Activated CD4-positive, alpha-beta T cell treated with anti-CD3 and anti-CD28 coated beads, Interleukin-2, amount 10 ng/mL, durations not matched to agents 24 days and 14 days (primary cell): ENCODE measurements at regions of chr4 and their contacts with region 1.

Region 1: GRCh38 chr4:30903502-30904217 is 183.5 kb downstream of the PCDH7 start:
- DNase-seq: no peak
- H3K4me3 Mint-ChIP-seq: no peak overlapping the region
- H3K27ac Mint-ChIP-seq: no peak overlapping the region
- H3K4me1 Mint-ChIP-seq: no peaks in the 10 kb centered on the region
- H3K27me3 Mint-ChIP-seq: no peaks in the 10 kb centered on the region

Region 2: DNA sequence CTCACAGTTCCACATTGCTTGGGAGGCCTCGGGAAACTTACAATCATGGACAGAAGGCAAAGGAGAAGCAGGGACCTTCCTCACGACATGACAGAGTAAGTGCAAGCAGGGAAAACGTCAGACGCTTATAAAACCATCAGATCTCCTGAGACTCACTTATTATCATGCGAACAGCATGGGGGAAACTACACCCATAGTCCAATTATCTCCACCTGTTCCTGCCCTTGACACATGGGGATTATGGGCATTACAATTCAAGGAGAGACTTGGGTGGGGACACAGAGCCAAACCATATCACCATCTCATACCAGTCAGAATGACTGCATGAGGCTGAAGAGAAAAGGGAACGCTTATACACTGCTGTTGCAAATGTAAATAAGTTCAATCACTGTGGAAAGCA is 1250.4 kb before region 1 on chr4:
- intact Hi-C with region 1: loop called (anchors 10 kb)
- DNase-seq: no peak
- H3K4me3 Mint-ChIP-seq: no peak overlapping the region
- H3K27ac Mint-ChIP-seq: no peak overlapping the region
- H3K4me1 Mint-ChIP-seq: no peaks in the 10 kb centered on the region
- H3K27me3 Mint-ChIP-seq: no peaks in the 10 kb centered on the region

Region 3: GRCh38 chr4:31283679-31284078 is 380.0 kb after region 1 on chr4:
- intact Hi-C with region 1: no loop called
- DNase-seq: no peak
- H3K4me3 Mint-ChIP-seq: no peak overlapping the region
- H3K27ac Mint-ChIP-seq: no peak overlapping the region
- H3K4me1 Mint-ChIP-seq: no peaks in the 10 kb centered on the region
- H3K27me3 Mint-ChIP-seq: no peaks in the 10 kb centered on the region